ENCODE measurements at regions of chr3 and their contacts with region 1.

Region 1: GRCh38 chr3:128680602-128681368 is 30.2 kb upstream of the RPN1 start:
- DNase-seq: peak; percentile 98
- H3K4me3 ChIP-seq: peak overlapping the region; percentile 74
- H3K27ac ChIP-seq: peak overlapping the region; percentile 81
- H3K4me1 ChIP-seq: peaks cover 23% of the 10 kb centered on the region
- CTCF ChIP-seq: peak; percentile 89

Region 2: GRCh38 chr3:128617557-128618397 is 63.0 kb before region 1 on chr3:
- CTCF ChIA-PET with region 1: no interaction called
- POLR2A ChIA-PET with region 1: no interaction called
- intact Hi-C with region 1: loop called (anchors 2 kb)
- DNase-seq: peak; percentile 97
- H3K4me3 ChIP-seq: peak overlapping the region; percentile 89
- H3K27ac ChIP-seq: peak overlapping the region; percentile 52
- H3K4me1 ChIP-seq: peaks cover 21% of the 10 kb centered on the region
- CTCF ChIP-seq: peak; percentile 92

Region 3: DNA sequence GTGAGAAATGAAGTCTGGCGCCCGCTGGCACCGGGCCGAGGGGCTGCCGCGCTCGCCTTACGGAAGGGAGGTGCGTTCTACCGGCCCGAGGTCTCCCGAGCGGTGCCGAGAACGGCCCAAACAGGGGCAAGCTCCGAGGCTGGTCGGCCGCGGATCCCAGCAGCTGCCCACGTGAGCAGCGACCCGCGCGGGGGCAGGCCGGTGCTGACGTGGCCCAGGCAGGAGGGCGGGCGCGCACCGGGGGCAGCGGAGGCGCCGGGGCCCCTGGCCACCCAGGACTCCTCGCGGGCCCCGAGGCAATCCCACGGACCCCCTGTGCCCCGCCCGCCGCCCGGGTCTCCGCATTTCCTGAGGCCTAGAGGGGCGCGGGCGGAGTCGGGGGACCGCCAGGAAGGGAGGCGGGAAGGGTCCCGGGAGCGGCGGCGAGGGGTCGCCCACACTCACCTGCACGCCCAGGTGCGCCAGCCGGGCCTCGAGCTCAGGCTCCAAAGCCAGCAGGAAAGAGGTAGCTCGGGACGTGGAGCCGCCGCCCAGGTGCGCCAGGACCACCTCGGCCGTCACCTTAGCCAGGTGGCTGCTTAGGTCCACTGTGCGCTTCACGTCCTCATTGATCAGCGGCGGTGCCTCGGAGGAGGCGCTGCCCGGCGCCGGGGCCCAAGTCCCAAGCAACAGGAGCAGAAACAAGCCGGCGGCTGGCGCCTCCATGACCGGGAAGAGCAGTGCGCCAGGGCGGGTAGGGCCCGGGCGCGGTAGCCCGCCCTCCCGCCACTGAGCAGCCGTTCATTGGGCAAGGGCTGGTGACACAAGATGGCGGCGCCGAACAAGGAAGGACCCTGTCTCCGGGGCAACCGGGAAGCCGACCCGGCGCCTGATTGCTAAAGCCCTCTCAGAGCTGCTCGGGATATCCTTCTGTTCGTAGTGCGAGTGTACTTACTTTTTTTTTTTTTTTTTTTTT is 30.4 kb before region 1 on chr3 and contains the start of gene RPN1:
- CTCF ChIA-PET with region 1: interaction called, 3 read pairs
- POLR2A ChIA-PET with region 1: interaction called, 4 read pairs
- intact Hi-C with region 1: loop called (anchors 2 kb)
- DNase-seq: peak; percentile 95
- H3K4me3 ChIP-seq: peak within 1 kb of the TSS; percentile 98
- H3K27ac ChIP-seq: peak within 1 kb of the TSS; percentile 75
- H3K4me1 ChIP-seq: peaks cover 12% of the 10 kb centered on the region
- CTCF ChIP-seq: no peak
- total RNA-seq, gene RPN1: 148 and 149 TPM in 2 replicates

Region 4: DNA sequence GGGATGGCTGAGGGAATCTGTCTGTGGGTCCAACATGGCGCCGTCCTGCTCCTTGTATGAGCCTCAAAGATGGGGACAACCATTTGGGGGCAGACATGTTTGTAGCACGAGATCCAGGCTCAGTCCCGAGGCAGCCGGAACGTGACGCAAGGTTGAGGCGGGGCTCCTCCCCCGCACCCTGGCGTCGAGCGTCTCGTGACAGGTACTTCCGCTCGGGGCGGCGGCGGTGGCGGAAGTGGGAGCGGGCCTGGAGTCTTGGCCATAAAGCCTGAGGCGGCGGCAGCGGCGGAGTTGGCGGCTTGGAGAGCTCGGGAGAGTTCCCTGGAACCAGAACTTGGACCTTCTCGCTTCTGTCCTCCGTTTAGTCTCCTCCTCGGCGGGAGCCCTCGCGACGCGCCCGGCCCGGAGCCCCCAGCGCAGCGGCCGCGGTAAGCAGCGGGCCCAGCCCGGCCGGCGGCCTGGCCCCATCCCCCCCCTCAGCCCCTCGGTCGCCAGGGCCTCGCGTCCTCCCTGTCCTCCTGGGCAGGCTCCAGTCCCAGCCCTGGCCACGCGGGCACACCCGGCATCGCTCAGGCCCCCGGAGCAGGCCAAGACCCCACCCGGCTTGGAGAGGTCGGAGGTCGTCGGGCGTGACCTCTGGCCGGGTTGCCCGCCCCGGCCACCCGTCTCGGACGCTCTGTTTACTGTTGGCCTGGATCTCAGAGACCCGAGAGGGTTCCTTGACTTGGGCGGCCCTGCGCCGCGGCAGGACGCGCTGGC is 45.3 kb after region 1 on chr3 and contains the start of gene RAB7A:
- CTCF ChIA-PET with region 1: interaction called, 4 read pairs
- POLR2A ChIA-PET with region 1: interaction called, 4 read pairs
- intact Hi-C with region 1: loop called (anchors 1 kb)
- DNase-seq: peak; percentile 98
- H3K4me3 ChIP-seq: peak within 1 kb of the TSS; percentile 93
- H3K27ac ChIP-seq: peak within 1 kb of the TSS; percentile 7
- H3K4me1 ChIP-seq: peaks cover 27% of the 10 kb centered on the region
- CTCF ChIP-seq: no peak
- total RNA-seq, gene RAB7A: 24.5 and 30.1 TPM in 2 replicates

Region 5: DNA sequence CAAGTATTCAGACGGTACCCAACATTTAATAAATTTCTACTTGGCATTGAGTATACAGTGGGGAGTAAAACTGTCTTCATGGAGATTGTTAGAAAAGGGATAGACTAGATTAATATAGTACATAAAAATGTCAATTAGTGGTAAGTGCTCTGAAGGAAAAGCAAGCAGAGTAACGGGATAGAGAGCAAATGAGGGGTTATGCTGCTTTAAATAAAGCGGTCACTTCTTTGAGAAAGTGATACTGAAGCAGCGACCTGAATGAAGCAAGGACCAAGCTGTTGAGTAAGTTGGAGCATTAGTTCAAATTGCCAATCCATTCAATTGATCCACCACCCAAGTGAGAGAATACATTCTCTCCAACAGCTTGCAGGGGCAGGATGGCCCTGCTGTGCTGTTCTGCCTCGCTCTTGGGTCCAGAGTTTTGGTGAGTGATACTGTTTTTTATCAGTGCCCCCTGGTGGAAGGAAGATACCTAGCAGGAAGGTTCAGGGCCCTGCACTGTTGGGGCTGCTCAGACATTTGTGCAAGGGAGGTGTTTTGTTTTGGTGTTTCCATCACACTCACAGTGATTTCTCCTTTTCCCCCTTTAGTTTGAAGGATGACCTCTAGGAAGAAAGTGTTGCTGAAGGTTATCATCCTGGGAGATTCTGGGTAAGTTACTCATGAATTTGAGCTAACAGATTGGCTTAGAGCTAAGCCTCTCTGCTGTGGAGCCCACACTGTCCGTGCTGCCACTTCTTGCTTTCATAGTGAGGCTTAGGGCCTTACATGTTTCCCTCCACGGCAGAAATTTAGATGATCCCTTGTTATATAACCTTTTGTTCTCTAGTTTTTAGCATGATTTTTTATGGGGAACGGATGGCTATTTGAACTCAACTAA is 114.2 kb after region 1 on chr3:
- CTCF ChIA-PET with region 1: interaction called, 5 read pairs
- POLR2A ChIA-PET with region 1: interaction called, 11 read pairs
- intact Hi-C with region 1: loop called (anchors 1 kb)
- DNase-seq: peak; percentile 77
- H3K4me3 ChIP-seq: no peak overlapping the region
- H3K27ac ChIP-seq: no peak overlapping the region
- H3K4me1 ChIP-seq: peaks cover 10% of the 10 kb centered on the region
- CTCF ChIP-seq: peak; percentile 88

Region 6: DNA sequence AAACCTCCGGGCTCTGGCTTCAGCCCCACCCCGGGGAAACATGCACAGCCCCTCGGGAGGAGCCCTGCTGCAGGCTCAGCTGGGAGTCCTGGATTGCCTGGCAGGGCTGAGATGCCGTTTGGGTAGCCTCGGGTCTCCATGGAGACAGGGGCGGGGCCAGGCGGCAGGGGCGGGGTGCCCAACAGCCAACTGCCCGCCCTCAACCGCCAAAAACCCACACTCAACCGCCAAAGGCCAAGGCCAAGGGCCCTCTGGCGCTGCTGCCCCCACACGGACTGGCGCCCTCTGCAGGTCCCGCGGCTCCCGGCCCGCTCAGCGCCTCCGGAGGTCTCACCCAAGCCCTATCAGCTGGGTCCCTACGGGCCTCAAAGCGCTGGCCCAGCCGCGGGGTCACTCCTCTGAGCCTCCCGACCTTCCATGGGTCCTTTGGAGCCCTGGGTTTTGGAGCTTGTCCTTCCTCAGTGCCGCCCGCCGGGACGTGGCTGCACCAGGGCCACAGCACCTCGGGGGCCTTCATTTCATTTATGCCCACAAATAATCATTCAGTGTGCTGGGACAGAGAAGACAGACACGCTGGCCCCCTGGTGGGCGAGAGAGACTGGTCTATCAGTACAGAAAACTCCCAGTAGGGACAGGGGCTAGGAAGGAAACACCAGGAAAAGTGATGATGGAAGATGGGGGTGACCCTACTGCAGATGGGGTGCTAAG is 165.1 kb after region 1 on chr3:
- CTCF ChIA-PET with region 1: no interaction called
- POLR2A ChIA-PET with region 1: no interaction called
- intact Hi-C with region 1: loop called (anchors 2 kb)
- DNase-seq: peak; percentile 76
- H3K4me3 ChIP-seq: peak overlapping the region; percentile 56
- H3K27ac ChIP-seq: peak overlapping the region; percentile 31
- H3K4me1 ChIP-seq: peaks cover 14% of the 10 kb centered on the region
- CTCF ChIP-seq: peak; percentile 78

Region 7: DNA sequence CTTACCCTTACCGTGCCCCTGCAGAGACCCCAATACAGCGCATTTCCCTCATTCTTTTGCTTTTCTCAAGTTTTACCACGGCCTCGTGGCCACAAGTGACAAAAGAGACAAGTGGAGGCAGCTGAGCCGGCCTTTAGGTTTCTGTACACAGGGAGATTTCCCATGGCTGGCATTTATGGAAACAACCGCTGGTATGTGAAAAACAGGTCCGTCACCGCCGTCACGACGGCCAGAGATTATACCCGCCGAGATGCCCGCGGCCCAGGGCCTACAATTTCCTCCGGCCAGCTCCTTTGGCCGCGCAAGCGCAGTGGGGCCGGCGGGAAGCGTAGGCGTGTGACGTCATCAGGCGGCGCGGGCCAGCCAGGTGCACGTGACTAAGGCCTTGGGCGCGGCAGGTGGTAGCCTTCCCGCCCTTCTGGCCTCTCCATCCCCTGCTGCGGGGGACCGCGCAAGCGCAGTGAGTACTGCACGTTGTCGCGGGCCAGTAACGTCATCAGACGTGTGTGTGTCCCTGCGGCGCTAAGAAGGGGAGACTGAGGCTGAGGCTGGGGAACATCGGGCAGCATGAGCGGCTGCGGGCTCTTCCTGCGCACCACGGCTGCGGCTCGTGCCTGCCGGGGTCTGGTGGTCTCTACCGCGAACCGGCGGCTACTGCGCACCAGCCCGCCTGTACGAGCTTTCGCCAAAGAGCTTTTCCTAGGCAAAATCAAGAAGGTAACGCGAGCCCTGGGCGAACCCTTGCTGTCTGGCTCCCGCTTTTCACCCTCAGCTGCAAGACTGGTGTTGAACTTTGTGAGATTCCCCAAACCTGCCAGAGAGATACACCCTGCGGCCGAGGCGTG is 198.6 kb after region 1 on chr3 and contains the start of gene ACAD9:
- CTCF ChIA-PET with region 1: no interaction called
- POLR2A ChIA-PET with region 1: interaction called, 5 read pairs
- intact Hi-C with region 1: loop called (anchors 5 kb)
- DNase-seq: peak; percentile 99
- H3K4me3 ChIP-seq: peak within 1 kb of the TSS; percentile 90
- H3K27ac ChIP-seq: peak within 1 kb of the TSS; percentile 58
- H3K4me1 ChIP-seq: peaks cover 25% of the 10 kb centered on the region
- CTCF ChIP-seq: no peak
- total RNA-seq, gene ACAD9: 88.5 and 93.7 TPM in 2 replicates

Measured in OCI-LY7 (cell line).